ENCODE measurements at regions of chr11 and their contacts with region 1.

Region 1: DNA sequence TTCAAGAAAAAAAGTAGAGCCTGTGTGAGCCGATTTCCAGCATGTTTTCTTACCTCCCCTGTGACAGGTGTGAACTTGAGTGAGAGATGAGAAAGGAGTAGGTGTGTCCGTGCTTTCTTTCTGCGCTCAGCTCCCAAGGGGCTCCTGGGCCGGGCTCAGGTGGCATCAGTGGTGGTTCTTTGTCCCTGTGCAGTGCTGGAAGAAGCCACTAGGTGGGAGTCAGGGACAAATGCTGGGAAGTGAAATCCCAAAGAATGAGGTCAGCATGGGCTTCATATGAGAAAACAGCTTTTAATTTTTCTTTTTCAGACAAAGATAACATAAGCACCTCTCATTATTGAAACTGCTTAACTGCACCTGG is 57.8 kb downstream of the PPFIBP2 start:
- DNase-seq: no peak
- H3K4me3 ChIP-seq: no peak overlapping the region
- H3K27me3 ChIP-seq: no peaks in the 10 kb centered on the region
- CTCF ChIP-seq: peak; percentile 96

Region 2: DNA sequence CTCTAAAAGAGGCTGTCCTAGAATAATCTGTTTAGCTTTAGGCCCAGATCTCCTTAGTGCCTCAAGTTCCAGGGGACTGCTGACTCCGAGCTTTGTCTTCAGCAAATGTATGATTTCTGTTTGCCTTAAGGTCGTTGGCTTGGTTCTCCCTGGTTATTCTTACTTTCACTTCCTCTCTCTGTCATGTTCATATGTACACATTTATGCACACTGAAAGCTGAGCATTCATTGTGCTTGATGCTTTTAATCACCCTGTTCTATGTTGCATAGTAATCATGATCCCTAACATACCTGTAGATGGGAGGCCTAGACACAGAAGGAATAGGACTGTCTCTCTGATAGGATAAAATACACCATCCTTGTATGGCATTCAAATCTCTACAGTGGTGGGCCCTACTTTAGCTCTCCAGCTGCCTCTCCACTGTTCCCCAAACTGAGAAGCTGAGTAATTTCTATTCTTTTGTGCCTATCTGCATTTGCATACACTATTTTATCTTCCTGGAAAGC is 50.6 kb before region 1 on chr11:
- CTCF ChIA-PET with region 1: interaction called, 48 read pairs
- POLR2A ChIA-PET with region 1: no interaction called
- DNase-seq: no peak
- H3K4me3 ChIP-seq: no peak overlapping the region
- H3K27me3 ChIP-seq: peaks cover 4% of the 10 kb centered on the region; the same call in 1 of the 2 replicates
- CTCF ChIP-seq: no peak

Region 3: GRCh38 chr11:7600205-7600775 is 28.7 kb after region 1 on chr11:
- CTCF ChIA-PET with region 1: interaction called, 13 read pairs
- POLR2A ChIA-PET with region 1: interaction called, 3 read pairs
- DNase-seq: no peak
- H3K4me3 ChIP-seq: no peak overlapping the region
- H3K27me3 ChIP-seq: no peaks in the 10 kb centered on the region
- CTCF ChIP-seq: no peak

Region 4: GRCh38 chr11:7637447-7638157 is 66.0 kb after region 1 on chr11:
- CTCF ChIA-PET with region 1: interaction called, 26 read pairs
- POLR2A ChIA-PET with region 1: no interaction called
- DNase-seq: peak; percentile 46
- H3K4me3 ChIP-seq: no peak overlapping the region
- H3K27me3 ChIP-seq: no peaks in the 10 kb centered on the region
- CTCF ChIP-seq: no peak

Region 5: GRCh38 chr11:7657306-7658025 is 85.8 kb after region 1 on chr11:
- CTCF ChIA-PET with region 1: interaction called, 121 read pairs
- POLR2A ChIA-PET with region 1: no interaction called
- DNase-seq: no peak
- H3K4me3 ChIP-seq: no peak overlapping the region
- H3K27me3 ChIP-seq: no peaks in the 10 kb centered on the region
- CTCF ChIP-seq: peak; percentile 70

Region 6: GRCh38 chr11:7688238-7688826 is 116.7 kb after region 1 on chr11:
- CTCF ChIA-PET with region 1: interaction called, 18 read pairs
- POLR2A ChIA-PET with region 1: no interaction called
- DNase-seq: no peak
- H3K4me3 ChIP-seq: no peak overlapping the region
- H3K27me3 ChIP-seq: no peaks in the 10 kb centered on the region; the same call in 1 of the 2 replicates
- CTCF ChIP-seq: peak; percentile 91

Measured in BJ (cell line).